CD4-positive, alpha-beta memory T cell (primary cell): ENCODE measurements at regions of chr3 and their contacts with region 1.

Region 1: DNA sequence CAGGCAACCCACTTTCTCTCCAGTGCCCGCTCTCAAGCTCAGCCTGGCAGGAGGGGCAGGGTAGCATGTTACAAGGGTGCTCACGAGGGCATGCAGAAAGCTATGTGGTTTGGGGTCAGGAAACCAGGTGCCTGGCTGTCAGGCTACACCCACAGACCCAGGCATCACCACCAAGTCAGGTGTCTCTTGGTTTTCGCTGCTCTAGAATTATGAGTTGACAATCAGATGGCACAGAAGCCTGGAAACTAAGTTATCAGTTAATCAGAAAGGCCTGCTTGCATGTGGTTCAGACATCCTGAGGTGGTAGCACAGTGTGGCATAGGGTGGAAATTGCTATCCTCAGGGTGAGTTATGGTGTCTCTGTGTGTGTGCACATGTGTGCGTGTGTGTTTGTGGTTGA is 16.2 kb upstream of the CCR9 start:
- DNase-seq: peak; percentile 86 to 93 (median 91)
- H3K4me3 ChIP-seq: no peak overlapping the region
- H3K4me3 Mint-ChIP-seq: peak overlapping the region; percentile 4 to 73 (median 56)
- H3K27ac ChIP-seq: no peak overlapping the region
- H3K27ac Mint-ChIP-seq: peak overlapping the region; percentile 14 to 86 (median 72)
- H3K4me1 ChIP-seq: peaks cover 44% of the 10 kb centered on the region
- H3K4me1 Mint-ChIP-seq: peaks cover 33 to 59% (median 42%) of the 10 kb centered on the region in 4 donors
- H3K27me3 ChIP-seq: no peaks in the 10 kb centered on the region
- H3K27me3 Mint-ChIP-seq: peaks cover 10 to 12% of the 10 kb centered on the region in 2 donors

Region 2: GRCh38 chr3:45881078-45882022 is 11.3 kb after region 1 on chr3:
- CTCF ChIA-PET with region 1: interaction called, 5 read pairs
- POLR2A ChIA-PET with region 1: interaction called, 20 read pairs
- intact Hi-C with region 1: loop called (anchors 1 kb)
- DNase-seq: peak; percentile 32 to 80 (median 40)
- H3K4me3 ChIP-seq: no peak overlapping the region
- H3K4me3 Mint-ChIP-seq: peak overlapping the region in 7 of 8 donors; percentile 11 to 78 (median 47)
- H3K27ac ChIP-seq: no peak overlapping the region
- H3K27ac Mint-ChIP-seq: peak overlapping the region in 5 of 7 donors; percentile 2 to 88 (median 31)
- H3K4me1 ChIP-seq: peaks cover 25% of the 10 kb centered on the region
- H3K4me1 Mint-ChIP-seq: peaks cover 19 to 43% (median 23%) of the 10 kb centered on the region in 4 donors
- H3K27me3 ChIP-seq: no peaks in the 10 kb centered on the region
- H3K27me3 Mint-ChIP-seq: peaks cover 2 to 5% of the 10 kb centered on the region in 2 donors